Cardiac septum (tissue), 1 donor: ENCODE measurements at regions of chr12 and their contacts with region 1.

Region 1: DNA sequence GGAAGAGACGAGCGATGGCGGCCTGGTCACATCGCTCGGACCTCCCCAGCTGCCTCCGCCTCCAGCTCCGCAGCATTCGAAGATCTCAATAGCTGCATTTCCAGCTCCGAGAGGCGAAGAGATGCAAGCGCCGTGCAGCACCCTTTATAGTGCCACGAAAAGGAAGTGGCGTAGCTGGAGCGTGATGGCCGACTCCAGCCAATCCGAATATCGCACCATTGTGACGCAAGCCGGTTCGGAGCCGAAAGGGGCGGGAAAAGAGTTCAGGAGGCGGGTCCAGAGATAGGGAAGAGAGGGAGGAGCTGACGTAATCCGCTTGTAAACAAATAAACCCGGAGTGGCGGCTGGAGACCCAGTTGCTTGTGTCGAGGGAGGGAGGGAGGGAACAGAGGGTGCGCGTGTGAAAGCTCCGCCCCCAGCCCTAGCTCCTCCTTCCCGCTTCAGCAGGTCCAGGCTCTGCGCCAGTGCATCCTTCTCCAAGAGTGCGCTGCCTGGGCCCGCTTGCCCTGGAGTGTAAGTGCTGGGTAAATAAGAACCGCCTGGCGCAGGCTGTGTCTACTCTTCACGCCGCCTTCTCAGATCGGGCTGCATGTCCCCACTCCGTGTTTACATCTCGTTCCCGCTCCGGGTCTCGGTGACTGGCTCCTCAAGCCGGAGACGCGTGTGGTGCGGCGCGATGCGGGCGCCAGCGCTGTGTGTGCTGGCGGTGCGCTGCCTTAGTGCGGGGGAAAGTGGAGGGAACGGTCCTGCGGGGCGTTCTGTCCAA is at the start of gene BTG1:
- DNase-seq: peak; percentile 99
- total RNA-seq, gene BTG1: 72.8 TPM

Region 2: GRCh38 chr12:91604894-91605293 is 541.0 kb before region 1 on chr12:
- intact Hi-C with region 1: loop called (anchors 5 kb)
- DNase-seq: no peak

Region 3: DNA sequence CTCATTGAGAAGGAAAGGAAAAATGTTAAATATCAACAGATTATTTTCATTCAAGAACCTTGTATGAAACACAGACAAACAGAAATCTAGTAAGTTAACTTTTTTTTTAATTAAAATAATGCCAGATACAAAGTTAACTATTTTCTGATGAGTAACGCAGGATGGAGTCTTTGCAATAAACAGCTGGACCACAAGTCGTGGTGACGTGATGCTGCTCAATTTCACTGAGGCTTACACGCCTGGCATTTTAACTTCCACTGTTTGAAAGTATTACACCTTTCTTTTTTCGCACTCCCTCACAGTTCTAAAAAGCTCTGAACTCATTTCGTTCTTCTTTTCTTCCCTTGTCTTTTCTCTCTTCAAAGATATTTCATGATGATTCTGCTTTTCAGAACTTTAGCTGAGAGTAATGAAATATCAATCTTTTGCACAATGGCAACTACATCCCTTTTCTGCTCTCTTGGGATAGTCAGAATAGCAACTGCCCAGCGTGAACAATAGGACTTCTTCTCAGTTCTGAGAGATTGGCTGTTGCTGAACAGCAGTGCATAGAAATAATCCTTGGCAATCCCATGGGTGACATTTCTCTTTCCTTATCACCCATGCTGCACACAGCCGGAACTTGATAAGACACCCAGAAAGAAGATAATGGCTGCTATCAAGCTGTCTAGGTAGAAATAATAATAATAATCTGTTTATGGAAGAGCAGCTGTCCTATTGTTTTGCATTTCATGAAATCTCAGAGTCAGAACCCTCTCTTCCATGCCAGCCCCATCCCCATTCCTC is 160.7 kb before region 1 on chr12:
- intact Hi-C with region 1: loop called (anchors 5 kb)
- DNase-seq: no peak

Region 4: DNA sequence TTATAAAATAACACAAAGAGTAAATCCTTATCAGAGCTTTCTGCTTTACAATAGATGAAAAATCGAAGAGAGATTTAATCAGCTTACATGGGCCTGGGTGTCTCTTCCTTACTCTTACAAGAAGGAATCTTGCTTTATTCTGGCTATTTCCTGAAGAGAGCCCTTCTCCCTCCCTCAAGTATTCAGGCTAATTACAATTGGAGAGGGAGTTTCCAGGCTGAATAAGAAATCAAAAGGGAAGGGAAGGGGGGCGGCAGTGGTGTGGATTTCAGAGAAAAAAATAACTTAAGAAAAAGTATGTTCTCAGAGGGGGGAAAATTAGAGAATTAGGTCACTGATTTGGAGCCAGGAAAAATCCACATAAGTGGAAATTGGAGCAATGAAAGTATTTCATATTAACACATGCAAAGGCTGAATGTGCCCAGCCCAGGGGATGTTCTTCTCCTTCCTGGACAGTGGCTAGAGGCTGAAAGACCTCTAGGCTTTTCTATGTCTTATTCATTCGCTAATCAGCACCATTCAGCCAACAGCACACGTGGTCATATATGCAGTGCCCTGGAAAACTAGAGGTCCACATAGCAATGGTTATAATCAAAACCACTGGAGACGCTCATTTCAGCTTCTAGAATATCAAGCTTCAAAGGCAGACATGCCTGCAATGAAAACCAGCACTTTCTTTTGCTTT is 158.6 kb after region 1 on chr12:
- intact Hi-C with region 1: loop called (anchors 10 kb)
- DNase-seq: no peak

Region 5: DNA sequence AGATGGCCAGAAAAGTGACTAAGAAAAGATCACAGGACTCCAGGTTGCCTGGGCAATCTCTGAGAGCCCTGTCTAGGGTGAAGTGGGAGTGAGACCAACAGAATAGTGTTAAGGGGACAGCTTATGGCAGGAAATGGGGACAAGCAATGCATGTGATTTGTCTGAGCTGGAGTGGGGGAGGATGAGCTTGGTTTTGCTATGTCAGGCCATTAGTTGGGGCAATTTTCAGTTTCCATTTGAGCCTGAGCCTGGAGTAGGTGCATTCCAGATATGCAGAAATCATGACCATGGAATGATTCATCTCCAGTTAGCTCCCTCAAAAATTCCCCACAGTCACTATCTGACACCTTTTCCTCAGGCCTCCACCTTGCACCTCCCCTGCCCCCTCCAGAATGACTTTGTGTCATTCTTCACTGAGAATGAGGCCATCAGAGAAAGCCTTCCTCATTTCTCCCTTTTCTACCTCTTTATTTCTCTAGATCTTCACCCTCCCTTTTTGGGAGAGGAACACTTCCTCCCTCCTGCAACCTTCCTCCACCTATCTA is 406.0 kb after region 1 on chr12:
- intact Hi-C with region 1: loop called (anchors 5 kb)
- DNase-seq: no peak